ENCODE measurements at regions of chr5 and their contacts with region 1.

Region 1: DNA sequence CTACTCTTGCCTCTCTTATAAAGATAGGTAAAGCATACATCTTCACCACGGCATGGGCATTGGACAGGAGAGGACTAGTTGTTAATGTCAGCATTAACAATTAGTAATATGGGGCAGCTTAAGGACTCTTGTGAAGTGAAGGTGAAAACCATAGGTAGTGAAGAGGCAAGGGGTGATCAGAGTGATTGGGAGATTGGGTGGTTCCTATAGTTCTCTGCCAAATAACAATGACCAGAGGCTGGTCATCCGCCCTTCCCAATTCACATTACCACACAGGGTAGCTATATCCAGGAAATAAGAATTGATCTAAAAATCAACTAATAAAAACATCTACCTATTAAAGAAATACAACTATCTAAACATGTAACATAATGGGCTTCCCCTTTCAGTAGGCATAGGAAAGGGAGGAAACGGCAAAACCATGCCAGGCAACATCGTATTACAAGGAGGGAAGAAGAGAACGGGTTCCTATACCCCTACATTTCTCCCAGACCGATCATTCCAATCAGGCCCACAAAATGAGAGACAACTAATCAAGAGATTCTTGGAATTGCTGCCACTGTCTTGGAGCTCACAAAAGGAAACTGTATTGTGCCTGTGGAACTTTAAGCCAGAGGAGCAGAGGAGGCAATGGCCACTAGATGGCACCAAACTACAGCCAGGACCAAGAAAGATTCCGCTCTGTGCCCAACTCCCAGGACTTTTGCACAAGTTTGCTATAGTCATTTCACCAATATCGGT is 121.6 kb downstream of the FBXL17 start:
- DNase-seq: peak; percentile 26 to 79 (median 62)
- ATAC-seq: peak; percentile 62
- H3K4me3 ChIP-seq: no peak overlapping the region
- H3K4me3 Mint-ChIP-seq: no peak overlapping the region
- H3K27ac ChIP-seq: no peak overlapping the region
- H3K27ac Mint-ChIP-seq: no peak overlapping the region
- H3K4me1 ChIP-seq: no peaks in the 10 kb centered on the region
- H3K4me1 Mint-ChIP-seq: peaks cover 4% of the 10 kb centered on the region
- H3K27me3 ChIP-seq: no peaks in the 10 kb centered on the region
- H3K27me3 Mint-ChIP-seq: no peaks in the 10 kb centered on the region
- CTCF ChIP-seq: peak; percentile 90

Region 2: DNA sequence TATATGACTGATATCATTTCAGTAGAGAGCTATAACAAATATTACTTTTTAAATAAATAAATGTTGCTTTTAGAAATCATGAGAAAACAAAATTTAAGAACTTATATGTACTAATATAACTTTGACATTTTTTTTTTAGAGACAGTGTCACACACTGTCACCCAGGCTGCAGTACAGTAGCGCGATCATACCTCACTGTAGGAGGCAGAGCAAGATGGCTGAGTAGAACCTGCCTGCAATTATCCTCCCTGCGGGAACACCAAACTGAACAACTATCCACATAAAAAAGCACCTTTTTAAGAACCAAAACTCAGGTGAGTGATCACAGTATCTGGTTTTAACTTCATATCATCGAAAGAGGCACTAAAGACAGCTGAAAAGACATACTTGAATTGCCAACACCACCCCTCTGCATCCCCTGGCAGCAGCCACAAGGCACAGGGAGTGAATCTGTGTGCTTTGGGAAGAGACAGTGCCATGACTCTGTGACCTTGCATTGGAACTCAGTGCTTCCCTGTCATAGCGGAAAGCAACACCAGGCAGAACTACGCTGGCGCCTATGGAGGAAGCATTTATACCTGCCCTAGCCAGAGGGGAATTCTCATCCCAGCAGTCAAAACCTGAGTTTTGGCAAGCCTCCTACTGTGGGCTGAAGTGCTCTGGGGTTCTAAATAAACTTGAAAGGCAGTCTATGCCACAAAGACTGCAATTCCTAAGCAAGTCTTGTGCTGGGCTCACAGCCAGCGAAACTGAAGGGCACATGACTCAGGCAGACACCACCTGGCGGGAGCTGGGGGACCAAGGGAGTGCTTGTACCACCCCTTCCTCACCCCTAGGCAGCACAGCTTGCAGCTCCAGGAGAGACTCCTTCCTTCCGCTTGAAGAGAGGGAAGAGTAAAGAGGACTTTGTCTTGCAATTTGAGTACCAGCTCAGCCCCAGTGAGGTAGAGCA is 21.1 kb before region 1 on chr5:
- CTCF ChIA-PET with region 1: interaction called, 12 read pairs
- POLR2A ChIA-PET with region 1: no interaction called
- intact Hi-C with region 1: no loop called
- DNase-seq: no peak
- ATAC-seq: no peak
- H3K4me3 ChIP-seq: no peak overlapping the region
- H3K4me3 Mint-ChIP-seq: no peak overlapping the region
- H3K27ac ChIP-seq: no peak overlapping the region
- H3K27ac Mint-ChIP-seq: no peak overlapping the region
- H3K4me1 ChIP-seq: no peaks in the 10 kb centered on the region
- H3K4me1 Mint-ChIP-seq: peaks cover 2% of the 10 kb centered on the region
- H3K27me3 ChIP-seq: no peaks in the 10 kb centered on the region
- H3K27me3 Mint-ChIP-seq: no peaks in the 10 kb centered on the region
- CTCF ChIP-seq: no peak

Region 3: GRCh38 chr5:108334225-108334624 is 73.9 kb after region 1 on chr5:
- CTCF ChIA-PET with region 1: interaction called, 13 read pairs
- POLR2A ChIA-PET with region 1: no interaction called
- intact Hi-C with region 1: no loop called
- DNase-seq: no peak
- ATAC-seq: no peak
- H3K4me3 ChIP-seq: no peak overlapping the region
- H3K4me3 Mint-ChIP-seq: no peak overlapping the region
- H3K27ac ChIP-seq: no peak overlapping the region
- H3K27ac Mint-ChIP-seq: no peak overlapping the region
- H3K4me1 ChIP-seq: no peaks in the 10 kb centered on the region
- H3K4me1 Mint-ChIP-seq: peaks cover 6% of the 10 kb centered on the region
- H3K27me3 ChIP-seq: no peaks in the 10 kb centered on the region
- H3K27me3 Mint-ChIP-seq: no peaks in the 10 kb centered on the region
- CTCF ChIP-seq: no peak

Region 4: GRCh38 chr5:108521841-108522506 is 261.7 kb after region 1 on chr5:
- CTCF ChIA-PET with region 1: no interaction called
- POLR2A ChIA-PET with region 1: no interaction called
- intact Hi-C with region 1: loop called in 1 of 2 experiments (anchors 10 kb)
- DNase-seq: peak in 3 of 9 experiments; percentile 7 to 50 (median 36)
- ATAC-seq: peak; percentile 66
- H3K4me3 ChIP-seq: no peak overlapping the region
- H3K4me3 Mint-ChIP-seq: no peak overlapping the region
- H3K27ac ChIP-seq: no peak overlapping the region
- H3K27ac Mint-ChIP-seq: no peak overlapping the region
- H3K4me1 ChIP-seq: no peaks in the 10 kb centered on the region
- H3K4me1 Mint-ChIP-seq: no peaks in the 10 kb centered on the region
- H3K27me3 ChIP-seq: no peaks in the 10 kb centered on the region
- H3K27me3 Mint-ChIP-seq: peaks cover 11% of the 10 kb centered on the region
- CTCF ChIP-seq: peak; percentile 63